A549 (cell line): ENCODE measurements at regions of chr7 and their contacts with region 1.

Region 1: DNA sequence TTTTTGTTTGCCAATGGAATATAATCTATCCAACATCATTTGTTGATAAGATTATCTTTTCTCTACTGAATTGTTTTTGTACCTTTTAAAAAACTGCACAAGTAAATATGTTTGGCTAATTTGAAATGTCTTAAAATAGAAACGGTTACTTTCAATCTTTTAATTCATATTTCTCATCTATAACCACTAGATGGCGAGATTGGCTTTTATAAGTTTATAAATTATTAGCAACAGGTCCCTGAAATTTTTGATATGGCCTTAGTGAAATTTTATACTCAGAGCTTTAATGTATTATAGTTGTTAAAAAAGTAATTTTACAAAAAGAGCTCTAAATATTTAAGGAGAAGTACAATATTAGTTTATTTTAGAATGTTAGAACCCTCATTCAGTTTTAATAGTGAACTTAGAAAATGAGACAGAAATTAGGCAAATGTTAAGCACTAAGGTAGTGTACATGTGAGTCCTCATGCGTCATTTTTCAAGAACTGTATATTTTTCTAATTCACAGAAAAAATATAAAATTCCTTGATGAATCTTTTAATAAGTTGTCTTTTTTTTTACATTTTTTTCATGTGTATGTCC is 592.5 kb downstream of the ARL4A start:
- DNase-seq: peak in 1 of 2 experiments; percentile 33
- ATAC-seq: no peak
- H3K4me3 ChIP-seq: no peak overlapping the region
- H3K27ac ChIP-seq: no peak overlapping the region
- H3K4me1 ChIP-seq: no peaks in the 10 kb centered on the region
- CTCF ChIP-seq: peak; percentile 53
- EP300 ChIP-seq: no peak
- POLR2A ChIP-seq: no peak
- RAD21 ChIP-seq: peak; percentile 56 to 76

Region 2: DNA sequence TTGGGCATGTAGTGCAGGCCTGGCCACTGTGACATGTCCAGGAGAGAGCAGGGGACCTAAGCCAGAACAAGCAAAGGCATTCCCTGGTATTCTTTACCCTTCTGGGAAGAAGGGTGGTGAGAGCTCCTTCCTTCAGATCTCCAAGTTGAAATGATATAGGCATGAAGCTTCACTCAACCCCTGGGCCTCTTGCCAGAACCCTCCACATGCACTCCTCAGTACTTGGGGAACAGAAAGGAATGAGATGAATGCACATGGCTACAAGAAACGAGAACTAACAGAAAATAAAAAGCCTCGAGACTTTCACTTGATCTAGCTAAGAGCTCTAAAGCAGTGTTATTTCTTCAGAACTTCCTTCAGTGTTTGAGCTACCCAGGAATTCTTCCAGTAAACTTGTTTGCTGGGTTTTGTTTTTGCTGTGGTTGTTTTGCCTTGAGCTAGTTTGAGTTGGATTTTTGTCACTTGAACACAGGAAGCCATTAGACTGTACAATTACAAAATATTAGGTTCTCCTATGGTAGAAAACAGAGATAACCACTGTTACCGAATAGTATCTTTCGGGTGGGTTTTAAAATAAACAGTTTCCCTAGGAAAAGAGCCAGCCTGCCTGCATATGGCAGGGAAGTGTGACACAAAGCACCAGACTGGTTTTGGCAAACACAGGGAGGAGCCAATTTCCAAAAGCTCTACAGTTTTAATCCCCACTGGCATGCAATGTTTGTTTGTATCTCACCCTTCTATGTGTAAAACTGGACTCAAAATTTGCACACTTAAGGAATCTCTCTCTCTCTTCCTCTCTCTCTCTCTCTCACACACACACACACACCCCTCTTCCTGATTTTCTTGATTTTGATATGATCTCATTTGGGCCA is 447.6 kb after region 1 on chr7:
- CTCF ChIA-PET with region 1: interaction called, 11 read pairs
- POLR2A ChIA-PET with region 1: no interaction called
- DNase-seq: no peak
- ATAC-seq: no peak
- H3K4me3 ChIP-seq: no peak overlapping the region
- H3K27ac ChIP-seq: no peak overlapping the region
- H3K4me1 ChIP-seq: no peaks in the 10 kb centered on the region
- CTCF ChIP-seq: no peak
- EP300 ChIP-seq: no peak
- POLR2A ChIP-seq: no peak
- RAD21 ChIP-seq: no peak

Region 3: DNA sequence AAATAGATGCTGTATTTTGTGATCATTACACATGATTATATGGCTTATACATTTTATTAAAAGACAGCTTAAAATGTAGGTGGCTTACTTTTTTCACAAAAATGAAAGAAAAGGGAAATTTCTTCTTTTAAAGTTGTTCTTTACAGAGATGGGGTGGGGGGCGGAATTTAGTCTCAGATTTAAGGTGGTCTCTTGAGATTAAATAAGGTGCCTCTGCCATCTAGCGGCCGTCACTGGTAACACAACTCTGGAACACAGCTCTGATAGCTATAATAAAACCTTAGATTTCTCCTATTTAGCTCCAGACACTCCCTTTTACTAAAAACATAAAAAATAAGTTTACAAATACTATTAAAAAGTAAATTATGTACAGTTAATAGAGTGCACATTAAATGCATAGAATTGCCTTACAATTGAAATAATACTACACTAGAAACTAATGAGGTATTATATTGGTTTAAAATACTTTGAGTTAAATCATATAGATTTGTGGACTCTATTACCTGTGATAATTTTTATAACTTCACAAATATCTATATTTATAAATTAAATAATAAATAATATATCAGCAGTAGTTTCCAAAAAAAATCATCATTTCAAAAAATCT is 1411.8 kb after region 1 on chr7:
- CTCF ChIA-PET with region 1: interaction called, 85 read pairs
- POLR2A ChIA-PET with region 1: no interaction called
- DNase-seq: peak in 1 of 2 experiments; percentile 32
- ATAC-seq: peak in 1 of 2 experiments; percentile 59; a peak in 2 of 6 replicates
- H3K4me3 ChIP-seq: no peak overlapping the region
- H3K27ac ChIP-seq: no peak overlapping the region
- H3K4me1 ChIP-seq: no peaks in the 10 kb centered on the region
- CTCF ChIP-seq: peak; percentile 88
- EP300 ChIP-seq: no peak
- POLR2A ChIP-seq: no peak
- RAD21 ChIP-seq: peak; percentile 72 to 81